AG04449 (cell line): ENCODE measurements at regions of chr6 and their contacts with region 1.

Region 1: GRCh38 chr6:148250975-148251685 is 91.5 kb upstream of the SASH1 start:
- DNase-seq: peak; percentile 47
- H3K4me3 ChIP-seq: no peak overlapping the region
- CTCF ChIP-seq: peak; percentile 31

Region 2: GRCh38 chr6:148144917-148145521 is 106.1 kb before region 1 on chr6:
- CTCF ChIA-PET with region 1: interaction called, 11 read pairs
- POLR2A ChIA-PET with region 1: no interaction called
- DNase-seq: peak; percentile 4
- H3K4me3 ChIP-seq: no peak overlapping the region
- CTCF ChIP-seq: peak; percentile 72

Region 3: GRCh38 chr6:148200293-148200692 is 50.8 kb before region 1 on chr6:
- CTCF ChIA-PET with region 1: interaction called, 10 read pairs
- POLR2A ChIA-PET with region 1: no interaction called
- DNase-seq: no peak
- H3K4me3 ChIP-seq: no peak overlapping the region
- CTCF ChIP-seq: no peak

Region 4: GRCh38 chr6:148231572-148231971 is 19.6 kb before region 1 on chr6:
- CTCF ChIA-PET with region 1: interaction called, 12 read pairs
- POLR2A ChIA-PET with region 1: no interaction called
- DNase-seq: peak; percentile 57
- H3K4me3 ChIP-seq: no peak overlapping the region
- CTCF ChIP-seq: no peak

Region 5: DNA sequence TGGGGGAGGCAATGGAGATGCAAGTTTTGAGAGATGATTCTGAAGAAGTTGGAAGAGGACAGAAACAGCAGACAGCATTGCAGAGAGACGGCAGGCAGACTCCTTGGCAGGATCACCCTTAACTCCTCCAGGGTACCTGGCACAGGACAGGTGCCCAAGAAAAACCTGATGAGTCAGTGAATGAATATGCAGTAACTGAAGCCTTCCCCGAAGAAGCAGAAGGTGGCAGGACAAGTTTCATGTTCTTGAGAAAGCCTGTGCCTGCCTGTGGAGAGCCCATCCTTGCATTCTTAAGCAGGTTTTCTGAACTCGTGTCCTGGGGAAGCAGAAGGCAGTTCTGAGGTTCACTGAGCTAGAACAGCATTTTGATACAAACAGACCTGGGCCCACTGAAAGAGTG is 11.9 kb after region 1 on chr6:
- CTCF ChIA-PET with region 1: interaction called, 23 read pairs
- POLR2A ChIA-PET with region 1: no interaction called
- DNase-seq: no peak
- H3K4me3 ChIP-seq: no peak overlapping the region
- CTCF ChIP-seq: no peak